ENCODE measurements at regions of chr3 and their contacts with region 1.

Region 1: DNA sequence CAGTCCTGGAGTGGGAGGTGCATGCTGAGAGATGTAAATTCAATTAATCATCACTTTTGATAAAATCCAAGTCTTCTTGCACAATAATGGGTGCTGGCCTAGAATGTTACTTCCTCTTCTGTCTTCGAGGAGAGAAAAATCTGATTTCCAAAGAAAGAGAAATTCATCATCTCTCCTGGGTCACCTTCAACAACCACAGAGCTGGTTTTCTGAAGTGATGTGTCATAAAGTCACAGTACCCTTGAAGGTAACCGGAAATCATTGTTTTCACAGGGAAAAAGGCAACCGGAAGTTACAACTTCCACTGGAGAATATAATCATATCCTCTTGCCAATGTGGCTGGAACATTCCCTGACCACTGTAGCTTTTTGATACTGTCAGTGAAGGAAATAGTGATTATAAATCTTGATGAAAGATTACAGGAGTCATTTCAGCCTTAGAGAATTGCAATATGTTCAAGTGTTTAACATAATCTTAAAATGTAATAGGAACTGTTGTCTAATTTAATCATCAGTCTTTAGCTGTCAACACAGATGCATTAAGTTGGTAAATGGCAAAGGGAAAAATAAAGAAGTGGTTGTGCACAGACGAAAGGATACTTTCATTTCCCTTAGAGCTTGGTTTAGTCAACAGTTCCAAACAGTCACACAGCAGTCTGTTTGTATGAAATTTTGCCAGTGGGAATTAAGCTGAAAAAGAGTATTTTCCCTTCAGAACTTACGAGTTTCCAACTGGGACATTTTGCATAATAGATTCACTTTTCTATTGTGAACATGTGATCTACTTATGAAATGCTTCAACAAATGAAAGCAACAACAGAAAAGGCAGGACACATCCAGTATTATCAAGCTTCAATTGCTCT is 106.5 kb upstream of the SLC4A7 start:
- DNase-seq: peak; percentile 95
- H3K4me3 ChIP-seq: peak overlapping the region in 1 of 3 experiments; percentile 20
- H3K27ac ChIP-seq: peak overlapping the region; percentile 98
- H3K4me1 ChIP-seq: peaks cover 30% of the 10 kb centered on the region
- H3K27me3 ChIP-seq: no peaks in the 10 kb centered on the region
- CTCF ChIP-seq: no peak
- POLR2A ChIP-seq: peak; percentile 86

Region 2: DNA sequence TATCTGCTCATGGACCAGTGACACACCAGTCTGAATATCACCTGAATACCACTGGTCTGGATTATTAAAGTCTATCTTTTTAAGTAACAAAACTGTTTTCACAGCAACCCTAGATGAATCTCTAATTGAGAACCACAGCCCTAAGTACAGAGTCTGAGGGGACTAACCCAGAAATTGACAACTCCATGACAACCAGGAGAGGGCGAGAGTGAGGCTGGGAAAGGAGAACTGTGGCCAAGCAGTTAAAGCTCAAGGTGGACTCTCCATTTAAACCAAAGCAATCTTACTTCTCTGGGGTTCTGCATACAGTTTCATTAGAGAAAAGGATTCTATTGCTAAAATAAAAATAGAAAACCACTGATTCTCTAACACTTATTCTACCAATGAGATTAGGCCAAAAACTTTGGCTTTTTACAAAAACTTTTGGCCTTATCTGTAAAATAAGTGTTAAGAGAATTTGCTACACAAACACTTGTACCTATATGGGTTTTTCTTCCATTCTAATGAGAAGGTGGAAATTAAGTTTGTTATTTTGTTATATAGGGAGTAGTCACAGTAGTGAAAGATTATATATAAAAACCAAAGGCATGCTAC is 232.9 kb before region 1 on chr3:
- CTCF ChIA-PET with region 1: interaction called, 5 read pairs
- POLR2A ChIA-PET with region 1: no interaction called
- dilution Hi-C with region 1: no loop called
- intact Hi-C with region 1: loop called (anchors 1 kb)
- DNase-seq: peak; percentile 80
- H3K4me3 ChIP-seq: no peak overlapping the region
- H3K27ac ChIP-seq: no peak overlapping the region
- H3K4me1 ChIP-seq: peaks cover 45% of the 10 kb centered on the region
- H3K27me3 ChIP-seq: no peaks in the 10 kb centered on the region
- CTCF ChIP-seq: peak; percentile 73 to 79
- POLR2A ChIP-seq: no peak

Region 3: DNA sequence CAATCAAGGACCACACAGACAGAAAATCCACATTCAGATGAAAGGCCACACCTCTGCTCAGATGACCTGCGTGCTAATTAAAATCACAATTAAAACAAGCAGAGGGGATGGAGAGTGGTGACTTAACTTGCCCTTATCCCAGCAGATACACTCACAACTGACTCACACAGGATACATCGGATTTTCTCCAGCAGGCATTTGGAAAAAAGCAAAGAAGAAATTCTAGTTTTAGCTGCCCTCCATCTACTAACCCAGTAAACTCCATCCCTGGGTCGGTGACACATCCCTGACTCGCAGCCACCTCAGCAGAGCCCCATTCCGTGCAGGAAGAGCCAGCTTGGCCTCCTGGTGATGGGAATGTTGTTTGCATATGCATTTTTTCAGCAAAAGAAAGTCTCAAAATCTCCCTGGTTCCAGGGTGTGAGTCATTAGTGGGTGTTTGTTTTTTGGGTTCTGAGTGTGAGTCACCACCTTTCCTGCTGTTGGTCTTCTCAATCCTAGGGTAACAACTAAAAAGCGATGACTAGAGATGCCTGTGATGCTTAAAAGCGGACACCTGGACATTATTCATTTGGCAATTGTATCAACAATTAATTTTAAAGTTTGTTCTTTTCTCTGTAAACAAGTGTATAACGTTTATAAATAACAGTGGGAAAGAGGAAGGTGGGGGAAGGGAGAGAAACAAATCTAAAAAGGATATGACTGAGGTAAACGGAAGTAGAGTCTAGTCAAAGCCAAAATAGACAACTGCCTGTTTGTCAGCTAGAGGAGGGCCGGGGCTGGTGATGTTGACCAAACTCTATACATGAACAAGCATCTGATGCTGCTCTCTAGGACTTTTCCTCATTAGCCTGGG is 56.7 kb before region 1 on chr3:
- CTCF ChIA-PET with region 1: interaction called, 11 read pairs
- POLR2A ChIA-PET with region 1: interaction called, 3 read pairs
- dilution Hi-C with region 1: no loop called
- intact Hi-C with region 1: loop called (anchors 1 kb)
- DNase-seq: peak; percentile 97
- H3K4me3 ChIP-seq: no peak overlapping the region
- H3K27ac ChIP-seq: peak overlapping the region; percentile 86
- H3K4me1 ChIP-seq: peaks cover 34% of the 10 kb centered on the region
- H3K27me3 ChIP-seq: no peaks in the 10 kb centered on the region
- CTCF ChIP-seq: peak; percentile 39 to 45
- POLR2A ChIP-seq: no peak

Region 4: DNA sequence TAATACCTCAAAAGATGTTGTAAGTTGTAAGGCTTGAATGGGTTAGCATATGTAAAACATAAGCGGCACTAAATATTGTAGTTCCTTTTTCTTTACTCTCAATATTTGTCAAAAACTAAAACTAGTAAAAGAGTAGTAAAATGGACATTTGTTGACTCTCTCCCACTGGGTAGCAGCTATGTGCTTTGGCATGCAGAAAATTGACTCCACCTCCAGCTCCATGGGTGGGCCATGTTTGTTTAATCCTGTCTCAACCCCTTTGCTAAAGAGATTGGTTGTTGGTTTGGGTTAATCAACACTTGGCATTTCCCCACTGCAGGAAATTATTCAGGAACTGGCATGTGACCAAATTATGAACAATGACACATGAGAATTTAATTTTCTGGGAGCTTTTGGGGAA is 16.7 kb after region 1 on chr3:
- CTCF ChIA-PET with region 1: interaction called, 6 read pairs
- POLR2A ChIA-PET with region 1: no interaction called
- dilution Hi-C with region 1: no loop called
- intact Hi-C with region 1: loop called (anchors 1 kb)
- DNase-seq: peak; percentile 84
- H3K4me3 ChIP-seq: no peak overlapping the region
- H3K27ac ChIP-seq: peak overlapping the region; percentile 54
- H3K4me1 ChIP-seq: peaks cover 16% of the 10 kb centered on the region
- H3K27me3 ChIP-seq: no peaks in the 10 kb centered on the region
- CTCF ChIP-seq: no peak
- POLR2A ChIP-seq: no peak

Region 5: DNA sequence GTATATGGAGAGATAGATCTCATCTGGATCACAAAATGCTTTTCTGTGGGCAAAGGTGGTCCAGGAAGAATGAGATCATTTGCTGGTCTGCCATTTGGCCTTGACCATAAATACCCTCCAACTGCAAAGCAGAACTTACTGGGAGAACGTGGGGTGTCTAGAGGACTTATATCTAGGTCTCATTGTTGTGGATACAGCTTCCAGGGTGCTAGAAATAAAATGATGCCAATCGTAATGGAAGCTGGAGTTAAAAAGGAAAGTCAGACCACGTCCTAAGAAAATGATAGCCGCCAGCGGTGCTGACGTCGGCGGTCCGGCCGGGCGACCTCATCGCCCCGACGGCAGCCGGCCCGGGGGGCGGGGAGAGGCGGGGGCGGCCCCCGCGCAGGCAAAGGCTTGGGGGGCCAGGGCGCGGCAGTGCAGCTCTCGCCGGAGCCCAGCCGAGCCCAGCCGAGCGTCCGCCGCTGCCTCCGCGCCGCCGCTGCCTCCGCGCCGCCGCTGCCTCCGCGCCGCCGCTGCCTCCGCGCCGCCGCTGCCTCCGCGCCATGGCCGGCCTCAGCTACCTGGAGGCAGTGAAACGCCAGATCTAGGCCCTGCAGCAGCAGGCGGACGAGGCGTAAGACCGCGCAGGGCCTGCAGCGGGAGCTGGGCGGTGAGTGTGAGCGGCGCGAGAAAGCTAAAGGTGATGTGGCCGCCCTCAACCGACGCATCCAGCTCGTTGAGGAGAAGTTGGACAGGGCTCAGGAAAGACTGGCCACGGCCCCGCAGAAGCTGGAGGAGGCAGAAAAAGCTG is 42.0 kb after region 1 on chr3:
- CTCF ChIA-PET with region 1: interaction called, 5 read pairs
- POLR2A ChIA-PET with region 1: interaction called, 3 read pairs
- dilution Hi-C with region 1: no loop called
- intact Hi-C with region 1: loop called (anchors 1 kb)
- DNase-seq: peak; percentile 66
- H3K4me3 ChIP-seq: peak overlapping the region; percentile 32 to 59 (median 42)
- H3K27ac ChIP-seq: peak overlapping the region; percentile 80
- H3K4me1 ChIP-seq: peaks cover 34% of the 10 kb centered on the region
- H3K27me3 ChIP-seq: no peaks in the 10 kb centered on the region
- CTCF ChIP-seq: no peak
- POLR2A ChIP-seq: no peak

Region 6: DNA sequence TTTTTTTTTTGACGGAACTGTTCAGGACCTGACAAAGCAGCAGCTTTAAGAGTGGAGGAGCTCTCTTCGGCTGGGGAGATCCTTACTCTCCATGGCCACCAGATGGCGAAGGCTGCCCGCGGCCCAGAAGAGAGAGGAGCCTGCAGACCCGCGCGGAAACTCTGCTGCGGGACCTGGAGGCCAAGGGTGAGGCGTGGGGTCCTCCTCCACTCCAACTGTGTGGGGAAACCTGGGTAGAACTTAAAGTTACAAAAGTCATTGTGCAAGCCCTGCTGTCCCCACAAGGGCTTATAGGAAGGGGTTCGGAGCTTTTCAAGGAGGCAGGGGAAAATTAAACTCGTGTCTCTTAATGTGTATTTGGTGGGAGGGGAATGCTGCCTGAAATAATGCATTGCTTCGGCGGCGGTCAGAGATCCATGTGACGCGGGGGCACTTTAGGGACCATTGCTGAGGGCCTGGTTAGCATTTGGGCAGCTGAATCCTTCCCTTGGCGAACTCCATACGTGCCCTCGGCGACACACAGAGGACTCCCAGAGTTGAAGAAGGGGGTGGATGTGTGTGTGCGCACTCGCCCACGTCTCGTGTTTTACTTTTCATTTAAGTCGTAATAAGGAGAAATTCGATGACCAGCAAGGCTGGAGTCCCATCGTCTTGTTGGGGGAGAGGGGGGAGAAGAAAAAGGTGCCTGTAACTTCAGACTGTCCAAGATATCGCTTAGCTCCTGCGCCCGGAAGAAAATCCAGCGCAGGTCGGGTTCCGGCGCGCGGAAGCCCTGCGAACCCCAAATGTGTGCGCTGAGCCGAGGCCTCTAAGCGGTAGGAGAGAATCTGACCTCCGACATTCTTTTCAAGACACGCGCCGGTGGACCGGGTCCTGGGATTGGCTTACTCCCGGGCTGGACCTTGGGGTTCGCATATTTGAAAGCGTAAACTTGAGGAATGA is 121.7 kb after region 1 on chr3:
- CTCF ChIA-PET with region 1: interaction called, 6 read pairs
- POLR2A ChIA-PET with region 1: no interaction called
- dilution Hi-C with region 1: no loop called
- intact Hi-C with region 1: loop called (anchors 2 kb)
- DNase-seq: peak; percentile 79
- H3K4me3 ChIP-seq: peak overlapping the region; percentile 27 to 50 (median 36)
- H3K27ac ChIP-seq: no peak overlapping the region
- H3K4me1 ChIP-seq: peaks cover 23% of the 10 kb centered on the region
- H3K27me3 ChIP-seq: peaks cover 67 to 76% of the 10 kb centered on the region in 2 experiments
- CTCF ChIP-seq: peak; percentile 68 to 90
- POLR2A ChIP-seq: no peak